AG04449 (cell line): ENCODE measurements at regions of chr10 and their contacts with region 1.

Region 1: DNA sequence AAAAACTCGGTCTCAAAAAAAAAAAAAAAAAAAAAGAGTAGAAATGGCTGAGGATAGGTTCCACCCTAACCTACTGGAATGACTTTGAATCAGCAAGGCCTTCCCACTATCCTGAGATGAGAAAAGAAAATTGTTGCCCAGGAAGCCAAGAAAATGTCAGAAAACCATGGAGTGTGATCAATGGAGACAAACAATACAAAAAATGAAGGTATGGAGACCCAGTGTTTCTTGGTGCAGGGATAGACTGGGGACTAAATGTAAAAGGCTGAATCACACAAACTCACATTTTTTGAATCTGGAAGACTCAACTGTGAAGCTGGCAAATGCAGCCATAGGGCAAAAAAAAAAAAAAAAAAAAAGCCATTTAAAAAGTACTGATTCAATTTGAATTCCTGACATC is 364.3 kb upstream of the ANKRD30A start:
- DNase-seq: no peak
- H3K4me3 ChIP-seq: no peak overlapping the region
- CTCF ChIP-seq: no peak

Region 2: GRCh38 chr10:36771725-36772124 is 10.6 kb after region 1 on chr10:
- CTCF ChIA-PET with region 1: interaction called, 10 read pairs
- POLR2A ChIA-PET with region 1: no interaction called
- DNase-seq: no peak
- H3K4me3 ChIP-seq: no peak overlapping the region
- CTCF ChIP-seq: no peak

Region 3: DNA sequence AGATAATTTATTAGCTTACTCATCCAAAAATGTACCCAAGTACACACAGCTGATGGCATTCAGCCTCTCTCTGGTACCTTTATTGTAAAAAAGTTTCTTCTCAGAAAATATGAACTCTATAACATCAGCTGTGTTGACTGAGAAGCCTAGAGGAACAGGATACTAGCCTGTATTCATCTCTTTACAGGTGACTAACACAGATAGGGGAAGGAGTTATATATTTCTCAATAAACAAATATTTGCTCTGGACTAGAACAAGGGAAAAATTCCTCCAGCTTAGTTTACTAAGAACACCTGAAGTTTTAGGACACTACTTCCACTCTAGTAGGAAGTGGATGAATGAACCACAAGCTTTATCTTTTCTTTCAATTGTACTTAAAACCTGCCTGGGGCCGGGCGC is 1028.5 kb after region 1 on chr10:
- CTCF ChIA-PET with region 1: no interaction called
- POLR2A ChIA-PET with region 1: no interaction called
- DNase-seq: no peak
- H3K4me3 ChIP-seq: no peak overlapping the region
- CTCF ChIP-seq: no peak